Calu3 (cell line): ENCODE measurements at regions of chr3 and their contacts with region 1.

Region 1: DNA sequence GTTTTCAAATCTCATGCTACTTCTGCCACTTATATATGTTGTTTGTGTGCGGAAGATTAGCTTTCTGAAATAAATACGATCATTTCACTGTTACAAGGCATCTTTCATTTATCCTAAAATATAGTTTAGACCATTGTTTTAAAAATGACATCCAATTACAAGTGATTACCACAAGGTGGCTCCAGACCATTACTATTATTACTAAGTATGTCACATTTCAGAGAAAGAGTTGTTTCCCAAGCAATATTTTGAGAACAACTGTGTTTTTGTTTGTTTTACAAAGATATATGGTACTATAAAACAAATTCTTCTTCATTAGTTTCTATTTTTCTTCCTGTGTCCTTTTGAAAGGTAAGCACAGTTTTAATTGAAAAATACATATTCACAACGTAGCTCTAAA is 136.0 kb upstream of the RAP2B start:
- DNase-seq: no peak
- H3K4me3 Mint-ChIP-seq: no peak overlapping the region
- H3K27ac Mint-ChIP-seq: no peak overlapping the region
- H3K4me1 Mint-ChIP-seq: no peaks in the 10 kb centered on the region
- H3K27me3 Mint-ChIP-seq: no peaks in the 10 kb centered on the region
- CTCF ChIP-seq: peak; percentile 63

Region 2: GRCh38 chr3:153268564-153269279 is 242.7 kb after region 1 on chr3:
- CTCF ChIA-PET with region 1: no interaction called
- intact Hi-C with region 1: no loop called
- DNase-seq: no peak
- H3K4me3 Mint-ChIP-seq: no peak overlapping the region
- H3K27ac Mint-ChIP-seq: no peak overlapping the region
- H3K4me1 Mint-ChIP-seq: no peaks in the 10 kb centered on the region
- H3K27me3 Mint-ChIP-seq: no peaks in the 10 kb centered on the region
- CTCF ChIP-seq: no peak

Region 3: DNA sequence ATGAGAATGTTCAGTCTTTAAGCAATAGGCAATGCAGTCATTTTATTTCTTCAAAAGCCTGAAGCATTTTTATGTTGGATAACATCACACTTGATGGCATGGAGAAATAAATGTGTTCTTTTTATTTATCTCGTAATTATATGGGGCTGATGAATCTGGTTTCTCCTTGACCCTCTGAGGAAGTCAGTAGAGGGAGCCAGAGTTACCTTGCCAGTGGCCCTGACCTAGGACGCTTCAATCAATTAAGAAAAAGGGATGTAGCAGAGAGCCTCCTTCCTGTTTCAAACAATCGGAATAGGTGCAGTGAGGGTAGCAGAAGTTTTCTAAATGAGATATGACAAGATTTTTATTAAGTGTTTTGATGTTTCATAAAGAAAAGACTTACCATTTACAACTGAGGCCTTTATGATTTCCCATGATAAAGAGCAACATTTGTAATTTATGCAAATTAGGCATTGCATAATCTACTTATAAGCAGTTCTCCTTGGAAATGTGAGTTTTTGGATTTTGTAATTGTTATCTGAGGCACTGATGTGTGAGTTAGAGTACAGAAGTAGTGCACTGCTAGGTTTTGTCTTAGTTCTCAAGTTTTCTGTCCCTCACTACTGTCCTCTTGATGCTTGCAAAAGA is 265.1 kb after region 1 on chr3:
- CTCF ChIA-PET with region 1: no interaction called
- intact Hi-C with region 1: loop called (anchors 1 kb)
- DNase-seq: peak; percentile 47
- H3K4me3 Mint-ChIP-seq: no peak overlapping the region
- H3K27ac Mint-ChIP-seq: no peak overlapping the region
- H3K4me1 Mint-ChIP-seq: peaks cover 37% of the 10 kb centered on the region
- H3K27me3 Mint-ChIP-seq: no peaks in the 10 kb centered on the region
- CTCF ChIP-seq: peak; percentile 71

Region 4: GRCh38 chr3:153439777-153440176 is 413.8 kb after region 1 on chr3:
- CTCF ChIA-PET with region 1: no interaction called
- intact Hi-C with region 1: loop called (anchors 1 kb)
- DNase-seq: no peak
- H3K4me3 Mint-ChIP-seq: no peak overlapping the region
- H3K27ac Mint-ChIP-seq: no peak overlapping the region
- H3K4me1 Mint-ChIP-seq: peaks cover 30% of the 10 kb centered on the region
- H3K27me3 Mint-ChIP-seq: no peaks in the 10 kb centered on the region
- CTCF ChIP-seq: no peak

Region 5: DNA sequence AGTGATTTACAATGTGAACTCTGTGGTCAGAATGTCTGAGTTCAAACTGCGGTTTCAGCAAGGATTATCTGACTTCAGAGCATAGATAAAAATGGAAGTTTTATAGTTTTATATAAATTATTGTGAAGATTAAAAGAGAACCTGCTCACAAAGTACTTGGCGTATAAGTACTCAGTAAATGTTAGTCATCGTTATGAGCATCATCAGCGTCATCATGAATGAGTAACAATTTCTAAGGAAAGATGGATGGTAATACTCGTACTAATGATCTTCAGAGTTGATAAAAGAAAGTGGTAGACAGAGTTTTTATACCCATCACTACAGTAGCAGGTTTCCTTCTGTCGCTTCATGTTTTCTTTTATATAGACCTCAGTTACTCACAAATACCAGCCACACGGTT is 477.8 kb after region 1 on chr3:
- CTCF ChIA-PET with region 1: no interaction called
- intact Hi-C with region 1: loop called (anchors 5 kb)
- DNase-seq: no peak
- H3K4me3 Mint-ChIP-seq: no peak overlapping the region
- H3K27ac Mint-ChIP-seq: no peak overlapping the region
- H3K4me1 Mint-ChIP-seq: no peaks in the 10 kb centered on the region
- H3K27me3 Mint-ChIP-seq: no peaks in the 10 kb centered on the region
- CTCF ChIP-seq: no peak

Region 6: GRCh38 chr3:153595186-153595815 is 569.3 kb after region 1 on chr3:
- CTCF ChIA-PET with region 1: no interaction called
- intact Hi-C with region 1: loop called (anchors 1 kb)
- DNase-seq: peak; percentile 32
- H3K4me3 Mint-ChIP-seq: no peak overlapping the region
- H3K27ac Mint-ChIP-seq: no peak overlapping the region
- H3K4me1 Mint-ChIP-seq: peaks cover 44% of the 10 kb centered on the region
- H3K27me3 Mint-ChIP-seq: no peaks in the 10 kb centered on the region
- CTCF ChIP-seq: peak; percentile 87

Region 7: DNA sequence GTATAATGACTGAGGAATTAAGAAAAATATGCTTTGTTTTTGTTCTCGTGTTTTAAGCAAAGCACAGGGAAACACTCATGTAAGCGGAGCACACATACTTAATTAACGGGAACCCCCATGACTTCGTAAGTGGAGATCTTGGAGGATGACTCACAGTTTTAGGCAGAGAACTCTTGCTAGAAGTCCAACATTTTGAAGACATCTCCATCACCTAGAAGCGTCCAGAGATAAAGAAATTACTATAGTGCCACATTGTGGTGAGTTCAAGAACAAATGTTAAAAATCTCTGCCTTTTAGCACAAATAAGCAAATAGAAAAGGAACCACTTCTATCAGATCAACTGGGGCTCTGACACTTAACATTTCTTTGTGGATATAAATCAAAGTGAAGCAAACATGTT is 901.1 kb after region 1 on chr3:
- CTCF ChIA-PET with region 1: no interaction called
- intact Hi-C with region 1: loop called (anchors 1 kb)
- DNase-seq: no peak
- H3K4me3 Mint-ChIP-seq: no peak overlapping the region
- H3K27ac Mint-ChIP-seq: no peak overlapping the region
- H3K4me1 Mint-ChIP-seq: no peaks in the 10 kb centered on the region
- H3K27me3 Mint-ChIP-seq: no peaks in the 10 kb centered on the region
- CTCF ChIP-seq: peak; percentile 38

Region 8: DNA sequence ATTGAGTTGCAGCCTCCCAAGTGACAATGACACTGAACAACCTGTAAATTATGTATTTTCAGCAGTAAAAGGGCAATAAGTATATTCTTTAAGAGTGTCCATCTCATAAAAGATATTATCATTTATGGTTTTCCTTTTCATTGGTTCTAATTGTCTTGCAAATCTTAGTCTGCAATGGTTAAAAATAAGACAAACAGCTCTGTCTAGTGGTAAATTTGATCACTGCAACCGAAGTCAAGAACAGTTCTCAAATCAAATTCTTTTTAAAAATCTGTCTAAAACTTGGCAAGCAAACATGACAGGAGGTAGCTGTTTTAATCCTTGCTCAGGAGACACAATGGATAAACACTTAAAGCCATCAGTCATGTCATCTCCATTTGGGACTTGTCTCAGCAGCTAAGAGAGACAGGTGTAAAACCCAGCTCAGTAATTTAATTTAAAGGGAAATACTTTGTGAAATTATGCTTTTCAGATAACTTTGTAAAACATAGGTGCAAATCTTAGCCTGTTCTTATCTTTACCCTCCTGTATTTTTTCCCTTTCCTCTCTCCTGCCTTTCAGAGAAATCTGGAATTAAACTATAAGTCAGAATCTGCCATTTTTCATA is 944.8 kb after region 1 on chr3:
- CTCF ChIA-PET with region 1: no interaction called
- intact Hi-C with region 1: loop called (anchors 5 kb)
- DNase-seq: no peak
- H3K4me3 Mint-ChIP-seq: no peak overlapping the region
- H3K27ac Mint-ChIP-seq: no peak overlapping the region
- H3K4me1 Mint-ChIP-seq: no peaks in the 10 kb centered on the region
- H3K27me3 Mint-ChIP-seq: no peaks in the 10 kb centered on the region
- CTCF ChIP-seq: peak; percentile 38